GM12878 (cell line): ENCODE measurements at regions of chr14 and their contacts with region 1.

Region 1: DNA sequence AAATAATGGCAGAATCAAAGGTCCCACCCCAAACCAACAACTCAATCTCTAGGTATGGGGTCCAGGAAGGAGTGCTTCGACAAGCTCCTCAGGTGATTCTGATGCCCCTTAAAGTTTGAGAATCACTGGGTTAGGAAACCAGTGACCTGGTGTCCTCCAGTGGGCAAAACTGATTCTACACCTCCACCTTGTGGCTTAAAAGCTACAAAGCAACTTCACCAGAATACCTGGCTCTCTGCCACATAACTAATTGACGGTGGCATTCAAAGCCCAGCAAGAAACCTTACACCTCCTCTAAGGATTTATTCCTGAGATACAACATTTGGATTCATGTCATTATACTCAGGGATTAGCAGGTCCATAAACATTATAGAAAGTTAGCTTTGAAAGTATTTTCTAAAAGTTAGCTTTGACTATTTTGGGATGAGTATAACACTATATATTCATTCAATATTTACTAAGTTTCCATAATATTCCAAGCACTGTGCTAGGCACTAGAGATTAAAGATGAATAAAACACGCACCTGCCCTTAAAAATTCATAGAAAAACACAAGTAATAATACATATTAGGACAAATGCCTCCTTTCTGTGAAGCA is 45.4 kb downstream of the DCAF5 start:
- DNase-seq: peak; percentile 20
- ATAC-seq: peak; percentile 84
- H3K4me3 ChIP-seq: no peak overlapping the region
- H3K27ac ChIP-seq: no peak overlapping the region
- H3K4me1 ChIP-seq: no peaks in the 10 kb centered on the region
- H3K27me3 ChIP-seq: no peaks in the 10 kb centered on the region
- CTCF ChIP-seq: peak; percentile 60 to 77 (median 68)
- EP300 ChIP-seq: no peak
- POLR2A ChIP-seq: no peak
- RAD21 ChIP-seq: peak; percentile 81

Region 2: GRCh38 chr14:68862954-68863594 is 244.4 kb before region 1 on chr14:
- CTCF ChIA-PET with region 1: interaction called, 37 read pairs
- POLR2A ChIA-PET with region 1: no interaction called
- RAD21 ChIA-PET with region 1: interaction called, 10 read pairs
- SMC1A ChIA-PET with region 1: interaction called, 8 read pairs
- in situ Hi-C with region 1: no loop called
- intact Hi-C with region 1: loop called (anchors 1 kb)
- DNase-seq: peak; percentile 32
- ATAC-seq: peak; percentile 90
- H3K4me3 ChIP-seq: no peak overlapping the region
- H3K27ac ChIP-seq: no peak overlapping the region
- H3K4me1 ChIP-seq: no peaks in the 10 kb centered on the region; the same call in 1 of the 2 replicates
- H3K27me3 ChIP-seq: no peaks in the 10 kb centered on the region
- CTCF ChIP-seq: peak; percentile 69 to 78 (median 75)
- EP300 ChIP-seq: no peak
- POLR2A ChIP-seq: no peak
- RAD21 ChIP-seq: peak; percentile 80

Region 3: GRCh38 chr14:69075086-69075485 is 32.4 kb before region 1 on chr14:
- CTCF ChIA-PET with region 1: no interaction called
- POLR2A ChIA-PET with region 1: no interaction called
- RAD21 ChIA-PET with region 1: no interaction called
- SMC1A ChIA-PET with region 1: no interaction called
- in situ Hi-C with region 1: no loop called
- intact Hi-C with region 1: no loop called
- DNase-seq: no peak
- ATAC-seq: no peak
- H3K4me3 ChIP-seq: no peak overlapping the region
- H3K27ac ChIP-seq: no peak overlapping the region
- H3K4me1 ChIP-seq: peaks cover 8% of the 10 kb centered on the region
- H3K27me3 ChIP-seq: no peaks in the 10 kb centered on the region
- CTCF ChIP-seq: no peak
- EP300 ChIP-seq: no peak
- POLR2A ChIP-seq: no peak
- RAD21 ChIP-seq: no peak

Region 4: DNA sequence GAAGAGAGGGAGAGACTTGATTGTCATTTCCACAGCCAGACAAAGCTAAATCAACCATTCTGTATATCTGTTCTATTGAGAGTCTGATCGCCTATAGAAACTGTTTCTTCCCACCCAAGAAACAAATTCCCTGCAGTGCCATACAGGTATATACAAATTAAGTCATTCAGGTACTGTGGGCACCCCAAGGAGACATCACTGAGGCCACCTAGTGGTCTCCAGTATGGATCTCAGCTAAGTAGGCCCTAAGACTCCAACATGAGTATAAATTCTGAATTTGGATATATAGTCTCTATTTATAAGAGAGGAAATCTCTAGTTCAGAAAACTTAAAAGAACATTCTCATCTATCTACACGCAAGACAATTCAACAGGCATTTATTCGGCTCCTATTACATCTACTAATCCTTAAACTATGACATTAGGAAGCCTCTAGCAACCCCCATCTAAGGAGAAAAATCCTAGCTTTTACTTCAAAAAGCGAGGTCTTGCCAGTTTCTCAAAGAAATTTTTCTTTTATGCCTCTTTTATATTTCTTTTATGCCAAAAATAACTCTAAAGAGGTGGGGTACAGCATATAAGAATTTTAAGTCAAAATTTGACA is 17.2 kb before region 1 on chr14:
- CTCF ChIA-PET with region 1: interaction called, 29 read pairs
- POLR2A ChIA-PET with region 1: no interaction called
- RAD21 ChIA-PET with region 1: interaction called, 9 read pairs
- SMC1A ChIA-PET with region 1: interaction called, 5 read pairs
- in situ Hi-C with region 1: no loop called
- intact Hi-C with region 1: no loop called
- DNase-seq: no peak
- ATAC-seq: peak; percentile 82
- H3K4me3 ChIP-seq: no peak overlapping the region
- H3K27ac ChIP-seq: no peak overlapping the region
- H3K4me1 ChIP-seq: peaks cover 4% of the 10 kb centered on the region
- H3K27me3 ChIP-seq: no peaks in the 10 kb centered on the region
- CTCF ChIP-seq: peak; percentile 50 to 65 (median 56)
- EP300 ChIP-seq: no peak
- POLR2A ChIP-seq: no peak
- RAD21 ChIP-seq: peak; percentile 58

Region 5: DNA sequence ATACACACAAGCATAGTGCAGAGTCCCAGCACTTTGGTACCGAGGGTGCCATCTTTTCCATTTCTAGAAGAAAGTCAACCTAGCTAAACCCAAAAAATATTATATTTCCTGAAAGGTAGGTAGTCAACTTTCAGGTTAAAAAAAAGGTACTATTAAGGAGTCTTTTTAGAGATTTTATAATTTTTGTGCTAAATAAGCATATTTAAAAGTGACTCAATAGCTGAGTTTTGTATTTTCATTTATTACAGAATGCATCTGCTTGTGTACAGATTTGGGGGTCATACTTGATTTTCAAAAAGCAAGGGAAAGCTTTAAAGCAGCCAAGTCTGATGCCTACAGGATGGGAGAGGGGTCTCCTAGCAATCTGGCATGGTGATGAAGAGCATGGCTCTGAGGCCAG is 10.8 kb after region 1 on chr14:
- CTCF ChIA-PET with region 1: interaction called, 10 read pairs
- POLR2A ChIA-PET with region 1: no interaction called
- RAD21 ChIA-PET with region 1: interaction called, 4 read pairs
- SMC1A ChIA-PET with region 1: interaction called, 5 read pairs
- in situ Hi-C with region 1: no loop called
- intact Hi-C with region 1: no loop called
- DNase-seq: no peak
- ATAC-seq: no peak
- H3K4me3 ChIP-seq: no peak overlapping the region
- H3K27ac ChIP-seq: no peak overlapping the region
- H3K4me1 ChIP-seq: no peaks in the 10 kb centered on the region
- H3K27me3 ChIP-seq: no peaks in the 10 kb centered on the region
- CTCF ChIP-seq: no peak
- EP300 ChIP-seq: no peak
- POLR2A ChIP-seq: no peak
- RAD21 ChIP-seq: no peak